Activated B cell treated with CpG ODN at 0.5 μM for 24 hours (primary cell): ENCODE measurements at regions of chr3 and their contacts with region 1.

Region 1: GRCh38 chr3:126971891-126972351 is 11.0 kb upstream of the PLXNA1 start:
- DNase-seq: peak; percentile 41
- ATAC-seq: peak; percentile 87
- H3K4me3 Mint-ChIP-seq: peak overlapping the region; percentile 19
- H3K27ac Mint-ChIP-seq: peak overlapping the region; percentile 46
- H3K4me1 Mint-ChIP-seq: peaks cover 15% of the 10 kb centered on the region
- H3K27me3 Mint-ChIP-seq: peaks cover 18% of the 10 kb centered on the region
- CTCF ChIP-seq: no peak

Region 2: GRCh38 chr3:126954141-126954842 is 17.6 kb before region 1 on chr3:
- CTCF ChIA-PET with region 1: interaction called, 3 read pairs
- POLR2A ChIA-PET with region 1: interaction called, 47 read pairs
- intact Hi-C with region 1: loop called (anchors 1 kb)
- DNase-seq: no peak
- ATAC-seq: peak; percentile 80
- H3K4me3 Mint-ChIP-seq: peak overlapping the region; percentile 72
- H3K27ac Mint-ChIP-seq: peak overlapping the region; percentile 94
- H3K4me1 Mint-ChIP-seq: peaks cover 40% of the 10 kb centered on the region
- H3K27me3 Mint-ChIP-seq: no peaks in the 10 kb centered on the region
- CTCF ChIP-seq: no peak

Region 3: DNA sequence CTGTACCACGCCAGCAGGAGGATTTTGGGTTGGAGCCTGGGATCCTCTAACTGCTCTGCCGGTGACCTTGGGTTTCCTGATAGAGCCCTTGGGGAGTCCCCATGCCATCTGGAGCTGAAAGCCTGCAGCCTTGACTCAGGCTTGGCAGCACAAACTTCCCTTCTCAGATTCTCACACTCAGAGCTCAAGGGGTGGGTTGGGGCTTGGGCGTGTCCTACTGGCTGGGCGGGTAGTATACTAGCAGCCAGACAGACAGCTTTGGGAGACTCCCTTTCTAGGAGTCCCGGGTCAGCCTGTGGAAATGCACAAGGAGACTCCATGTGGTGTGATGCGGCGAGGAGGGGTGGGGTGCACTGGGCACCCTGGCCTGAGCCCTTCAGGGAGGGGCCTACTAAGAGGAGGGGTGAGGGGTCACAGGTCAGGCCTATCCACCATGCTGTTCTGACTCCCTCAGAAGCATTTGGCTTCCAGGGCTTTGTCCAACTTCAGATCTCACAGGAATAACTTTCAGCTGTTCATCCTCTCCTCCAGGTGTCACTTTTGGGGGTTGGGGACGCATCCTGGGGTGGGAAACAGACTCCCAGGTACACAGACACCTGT is 10.6 kb before region 1 on chr3:
- CTCF ChIA-PET with region 1: interaction called, 7 read pairs
- POLR2A ChIA-PET with region 1: interaction called, 47 read pairs
- intact Hi-C with region 1: loop called (anchors 1 kb)
- DNase-seq: no peak
- ATAC-seq: peak; percentile 97
- H3K4me3 Mint-ChIP-seq: no peak overlapping the region
- H3K27ac Mint-ChIP-seq: peak overlapping the region; percentile 24
- H3K4me1 Mint-ChIP-seq: peaks cover 22% of the 10 kb centered on the region
- H3K27me3 Mint-ChIP-seq: no peaks in the 10 kb centered on the region
- CTCF ChIP-seq: no peak